Posterior vena cava (tissue), 2 donors: ENCODE measurements at regions of chr10 and their contacts with region 1.

Region 1: GRCh38 chr10:101769541-101770180 is 6.3 kb downstream of the FGF8 start:
- DNase-seq: peak; percentile 30

Region 2: DNA sequence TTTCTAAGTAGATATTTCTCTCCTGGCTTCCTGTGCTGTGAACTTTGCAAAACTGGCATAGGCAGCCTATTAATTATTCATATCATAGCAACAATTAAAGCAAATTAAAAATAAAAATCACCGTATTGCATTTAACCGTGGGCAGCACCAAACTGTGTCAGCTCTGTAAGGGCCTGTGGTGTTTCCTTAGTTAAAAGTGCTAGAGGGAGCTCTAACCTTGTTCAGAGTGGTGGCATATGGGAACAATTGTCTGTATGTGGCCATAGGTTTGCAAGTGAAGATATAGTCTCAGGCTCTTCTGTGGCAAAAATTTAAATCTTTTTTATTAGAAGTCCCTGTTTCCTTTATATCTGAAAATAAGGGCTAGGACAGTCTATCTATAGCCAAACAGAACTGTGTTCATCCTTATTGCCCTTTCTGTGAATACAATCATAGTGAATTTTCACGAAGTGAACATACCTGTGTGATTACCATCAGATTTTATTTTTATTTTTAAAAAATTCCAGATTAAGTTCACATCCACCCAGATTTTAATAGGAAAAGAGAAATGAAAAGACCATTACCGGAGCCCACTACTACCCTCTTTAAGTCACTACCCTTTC is 274.2 kb before region 1 on chr10:
- intact Hi-C with region 1: loop called in 1 of 2 experiments (anchors 2 kb)
- DNase-seq: no peak

Region 3: GRCh38 chr10:101580486-101581399 is 188.9 kb before region 1 on chr10:
- intact Hi-C with region 1: no loop called
- DNase-seq: no peak

Region 4: DNA sequence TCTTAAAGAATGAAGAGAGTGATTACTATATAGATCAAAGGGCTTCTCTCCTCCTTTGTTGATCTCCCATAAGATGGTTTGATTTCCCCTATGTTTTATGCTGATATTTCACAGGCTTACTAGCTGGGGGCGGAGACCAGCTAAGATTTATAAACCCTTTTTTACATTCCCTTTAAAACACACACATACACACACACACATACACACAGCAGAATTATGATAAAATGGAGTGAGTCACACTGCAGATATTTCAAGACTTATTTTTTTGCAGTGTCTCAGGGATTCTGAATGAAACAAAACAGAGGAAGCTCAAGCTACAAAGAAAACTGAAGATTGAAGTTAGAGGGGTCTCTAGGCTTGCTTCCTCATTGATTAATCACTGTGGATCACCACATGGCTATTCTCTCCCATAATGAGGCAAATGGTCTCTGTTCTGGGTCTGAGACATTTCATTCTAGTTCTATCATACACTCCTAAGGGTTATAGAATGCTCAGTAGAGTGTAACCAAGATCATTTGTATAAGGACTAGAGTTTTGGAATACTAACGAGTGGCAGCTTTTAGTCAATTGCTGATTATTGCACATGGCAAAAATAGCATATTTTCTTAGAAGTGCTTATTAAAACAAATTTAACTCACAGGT is 1525.8 kb after region 1 on chr10:
- intact Hi-C with region 1: no loop called
- DNase-seq: no peak

Region 5: GRCh38 chr10:103645141-103646054 is 1875.7 kb after region 1 on chr10:
- intact Hi-C with region 1: no loop called
- DNase-seq: peak; percentile 94